GM10248 (cell line): ENCODE measurements at regions of chr4 and their contacts with region 1.

Region 1: GRCh38 chr4:38179690-38180377 is 219.6 kb downstream of the PTTG2 start:
- DNase-seq: peak; percentile 61
- CTCF ChIP-seq: peak; percentile 84

Region 2: DNA sequence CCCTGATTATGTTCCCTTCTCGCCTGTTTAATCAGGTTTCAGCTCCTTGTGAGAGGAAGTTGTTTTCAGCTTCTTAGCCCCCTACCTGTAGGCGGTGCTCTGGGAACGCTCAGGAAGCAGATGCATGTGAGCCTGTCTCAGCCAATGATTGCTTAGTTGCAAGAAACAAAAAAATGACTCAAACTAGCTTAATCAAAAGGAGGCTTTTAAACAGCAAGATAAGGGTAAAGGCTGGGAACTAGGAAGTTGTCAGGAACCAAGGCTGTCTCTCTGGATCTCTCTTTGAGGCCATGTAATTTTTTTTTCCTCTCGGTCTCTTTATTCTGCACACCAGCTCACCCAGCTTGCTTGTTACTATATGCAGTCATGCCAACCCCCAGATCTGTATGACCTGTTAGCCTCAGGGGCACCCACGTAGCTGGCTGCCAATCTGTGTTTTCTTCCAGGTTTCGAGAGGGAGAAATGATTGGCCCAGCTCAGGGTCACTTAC is 110.5 kb before region 1 on chr4:
- CTCF ChIA-PET with region 1: interaction called, 26 read pairs
- POLR2A ChIA-PET with region 1: no interaction called
- DNase-seq: peak; percentile 44
- CTCF ChIP-seq: no peak

Region 3: GRCh38 chr4:38160487-38161207 is 19.2 kb before region 1 on chr4:
- CTCF ChIA-PET with region 1: interaction called, 27 read pairs
- POLR2A ChIA-PET with region 1: no interaction called
- DNase-seq: peak; percentile 81
- CTCF ChIP-seq: no peak

Region 4: GRCh38 chr4:38204339-38205035 is 24.7 kb after region 1 on chr4:
- CTCF ChIA-PET with region 1: interaction called, 14 read pairs
- POLR2A ChIA-PET with region 1: no interaction called
- DNase-seq: no peak
- CTCF ChIP-seq: no peak

Region 5: GRCh38 chr4:38667085-38667893 is 487.5 kb after region 1 on chr4:
- CTCF ChIA-PET with region 1: interaction called, 40 read pairs
- POLR2A ChIA-PET with region 1: no interaction called
- DNase-seq: peak; percentile 33
- CTCF ChIP-seq: no peak

Region 6: GRCh38 chr4:38743866-38744265 is 564.0 kb after region 1 on chr4:
- CTCF ChIA-PET with region 1: interaction called, 16 read pairs
- POLR2A ChIA-PET with region 1: no interaction called
- DNase-seq: no peak
- CTCF ChIP-seq: no peak

Region 7: DNA sequence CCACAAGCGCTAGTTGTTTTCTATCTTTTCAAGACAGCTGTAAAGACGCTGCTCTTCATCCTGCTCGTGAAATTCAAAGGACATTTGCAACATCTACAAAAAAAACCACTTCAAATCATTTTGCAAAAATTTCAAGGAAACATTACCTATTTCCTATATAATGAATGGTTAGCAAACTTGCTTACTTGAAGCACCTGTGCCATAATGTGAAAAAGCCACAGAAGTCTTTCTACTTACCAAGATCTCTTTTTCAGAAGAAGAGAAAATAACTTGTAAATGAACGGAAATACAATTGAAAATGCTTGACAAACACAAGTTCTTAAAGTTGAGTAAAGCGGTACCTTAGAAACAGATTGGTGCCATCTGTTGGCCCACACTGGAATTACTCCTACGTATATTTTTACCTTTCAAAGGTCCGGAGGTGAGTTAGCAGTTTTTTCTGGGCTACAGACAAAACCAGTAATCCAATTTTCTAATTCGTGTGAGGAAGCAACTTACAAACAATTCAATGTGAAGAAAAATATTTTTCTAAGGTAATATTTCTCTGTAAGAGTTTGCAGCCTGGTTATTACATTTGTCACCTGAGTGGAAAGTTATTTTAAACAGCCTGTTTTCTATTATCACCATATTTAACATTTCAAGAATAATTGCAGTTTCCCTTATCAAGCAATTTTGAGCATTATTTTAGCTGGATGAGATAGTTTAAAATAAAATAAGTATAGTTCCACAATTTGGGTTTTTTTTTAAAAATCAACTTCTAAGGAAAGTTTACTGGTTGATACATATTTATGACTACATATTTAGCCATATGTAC is 676.9 kb after region 1 on chr4 and contains the start of gene TLR6:
- CTCF ChIA-PET with region 1: interaction called, 15 read pairs
- POLR2A ChIA-PET with region 1: no interaction called
- DNase-seq: peak; percentile 47
- CTCF ChIP-seq: peak; percentile 52